ENCODE measurements at regions of chr14 and their contacts with region 1.

Region 1: DNA sequence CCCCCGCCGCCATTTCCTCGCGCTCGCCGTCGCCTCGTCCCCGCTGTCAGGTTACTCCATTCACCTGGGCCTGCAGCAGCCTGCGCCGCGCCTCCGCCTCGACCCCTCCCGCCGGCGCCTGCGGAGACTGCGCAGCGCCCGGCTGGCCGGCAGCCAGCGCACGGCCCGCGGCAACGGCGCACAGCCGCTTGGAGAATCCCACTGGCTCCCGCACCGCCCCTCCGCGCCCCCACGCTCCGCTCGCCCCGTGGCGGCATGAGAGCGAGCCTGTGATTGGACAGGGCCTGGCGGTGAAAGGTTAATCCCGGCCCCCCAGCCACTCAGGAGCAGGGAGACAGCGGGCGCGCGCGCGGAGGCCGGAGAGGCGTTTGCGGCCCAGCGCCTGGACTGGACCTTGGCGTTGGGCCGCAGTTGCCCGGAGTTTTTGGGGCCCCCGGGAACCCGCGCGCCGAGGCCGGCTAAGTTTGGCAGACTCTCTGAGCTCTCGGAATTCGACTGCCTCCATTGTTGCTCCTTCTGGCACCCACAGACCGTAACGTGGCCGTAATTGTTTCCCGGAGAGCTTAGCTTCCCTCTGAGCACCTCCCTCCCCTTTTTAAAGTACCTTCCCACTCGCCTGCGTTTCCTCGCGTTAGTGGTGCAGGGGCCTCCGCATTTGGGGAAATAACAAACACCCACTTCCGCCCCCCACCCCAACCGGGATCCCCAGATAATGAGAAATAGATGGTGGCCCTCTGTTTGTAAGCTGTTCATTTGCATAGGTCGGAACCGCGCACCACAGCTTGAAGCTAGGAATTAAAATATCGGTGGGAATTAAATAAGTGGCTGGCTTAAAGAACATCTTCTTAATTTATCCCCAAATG is at the start of gene DICER1:
- DNase-seq: peak; percentile 97 to 99
- ATAC-seq: peak; percentile 96 to 98 (median 98)
- H3K4me3 ChIP-seq: peak within 1 kb of the TSS; percentile 83
- H3K27ac ChIP-seq: peak within 1 kb of the TSS; percentile 94
- H3K4me1 ChIP-seq: peaks cover 32% of the 10 kb centered on the region
- H3K27me3 ChIP-seq: no peaks in the 10 kb centered on the region
- CTCF ChIP-seq: no peak
- total RNA-seq, gene DICER1: 30.7 to 41.5 (median 39.3) TPM

Region 2: DNA sequence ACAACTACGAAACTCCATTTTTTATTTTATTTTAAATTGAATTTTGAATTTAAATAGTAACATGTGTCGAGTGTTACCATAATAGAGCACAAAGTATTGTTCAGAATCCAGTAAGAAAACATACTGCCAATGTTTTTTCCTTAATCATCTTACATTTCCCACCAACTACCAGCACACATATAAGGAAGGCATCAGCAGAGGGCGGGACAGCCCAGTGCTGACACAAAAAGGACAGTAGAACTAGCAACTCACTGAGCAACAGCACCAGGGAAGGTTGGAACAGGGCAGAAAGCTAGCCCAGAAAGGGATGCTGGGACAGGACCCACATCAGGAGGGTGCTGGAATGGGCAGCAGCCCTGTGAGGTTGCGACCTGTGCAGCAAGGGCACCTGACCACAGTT is 44.1 kb before region 1 on chr14:
- intact Hi-C with region 1: no loop called
- DNase-seq: no peak
- ATAC-seq: no peak
- H3K4me3 ChIP-seq: no peak overlapping the region
- H3K27ac ChIP-seq: no peak overlapping the region
- H3K4me1 ChIP-seq: peaks cover 8% of the 10 kb centered on the region
- H3K27me3 ChIP-seq: no peaks in the 10 kb centered on the region
- CTCF ChIP-seq: no peak

Region 3: DNA sequence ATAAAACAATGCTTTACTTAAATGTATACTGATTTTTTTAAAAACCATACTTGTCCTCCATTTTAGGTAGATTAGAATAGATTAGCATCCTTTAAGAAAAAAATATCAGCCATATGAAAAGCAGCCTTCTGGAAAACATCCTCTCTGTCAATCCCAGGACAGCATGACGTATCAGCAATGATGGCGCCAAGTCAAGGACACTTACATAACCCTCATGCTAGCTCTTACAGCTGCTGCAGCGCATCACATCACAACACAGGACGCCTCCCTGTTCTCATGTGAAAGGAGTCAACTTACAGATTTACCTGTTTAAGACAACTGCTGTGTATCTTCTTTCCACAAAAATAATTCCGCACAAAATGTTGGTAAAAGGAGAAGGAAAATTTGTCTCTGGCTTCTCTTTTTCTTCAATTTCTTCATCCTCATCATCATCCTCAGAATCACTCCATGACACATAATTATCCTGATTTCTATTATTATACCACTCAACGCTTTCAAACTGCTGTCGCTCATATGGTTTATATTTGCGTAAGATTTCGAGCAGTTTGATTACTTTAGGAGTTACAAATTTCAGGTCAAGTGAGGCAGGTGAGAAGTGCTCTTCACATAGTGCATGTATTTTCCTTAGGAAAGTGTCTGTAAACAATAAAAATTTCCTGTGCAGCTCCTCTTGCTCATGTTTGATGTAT is 33.5 kb before region 1 on chr14:
- intact Hi-C with region 1: loop called in 1 of 2 experiments (anchors 2 kb)
- DNase-seq: peak; percentile 65 to 83
- ATAC-seq: peak; percentile 97 to 99 (median 98)
- H3K4me3 ChIP-seq: no peak overlapping the region
- H3K27ac ChIP-seq: peak overlapping the region; percentile 78
- H3K4me1 ChIP-seq: peaks cover 16% of the 10 kb centered on the region
- H3K27me3 ChIP-seq: no peaks in the 10 kb centered on the region
- CTCF ChIP-seq: no peak

Region 4: DNA sequence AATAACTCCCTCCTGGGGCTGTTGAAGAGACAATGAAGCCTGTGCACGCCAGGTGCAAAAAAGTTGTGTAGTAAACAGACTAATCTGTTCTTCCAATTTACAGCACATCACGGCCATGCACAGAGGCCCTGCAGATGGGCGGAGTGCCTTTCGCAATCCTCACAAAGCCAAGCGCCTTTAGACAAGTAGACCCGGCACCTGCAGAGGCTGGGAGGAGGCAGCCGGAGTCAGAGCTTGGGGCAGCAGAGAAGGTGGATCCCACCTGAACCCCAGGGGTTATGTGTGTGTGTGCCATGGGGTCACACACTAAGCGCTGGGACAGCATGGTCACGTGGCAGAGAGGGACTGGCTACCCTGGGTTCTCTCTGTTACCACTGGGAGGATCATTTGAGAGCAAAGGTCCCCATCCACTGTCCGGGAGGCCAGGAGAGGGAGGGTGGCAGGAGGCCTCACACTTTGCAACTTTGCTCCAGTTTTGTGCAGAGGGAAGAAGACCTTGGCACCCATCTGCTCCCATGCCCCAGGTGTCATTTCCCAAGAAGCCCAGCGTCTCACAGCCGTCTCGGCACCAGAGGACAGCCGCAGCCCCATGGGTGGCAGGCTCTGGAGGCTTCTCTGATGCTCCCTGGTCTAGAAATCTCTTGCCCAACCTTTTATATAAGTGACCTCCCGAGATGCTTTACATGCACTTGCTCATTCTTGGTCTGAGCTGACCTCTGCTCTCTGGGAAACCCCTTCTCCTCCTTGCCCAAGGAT is 79.7 kb after region 1 on chr14:
- intact Hi-C with region 1: no loop called
- DNase-seq: peak in 1 of 2 donors; percentile 82
- ATAC-seq: peak in 2 of 4 donors; percentile 33 to 61
- H3K4me3 ChIP-seq: no peak overlapping the region
- H3K27ac ChIP-seq: no peak overlapping the region
- H3K4me1 ChIP-seq: no peaks in the 10 kb centered on the region
- H3K27me3 ChIP-seq: no peaks in the 10 kb centered on the region
- CTCF ChIP-seq: no peak

Region 5: GRCh38 chr14:95534299-95535225 is 377.0 kb after region 1 on chr14 and contains the start of gene GLRX5:
- intact Hi-C with region 1: loop called in 1 of 2 experiments (anchors 10 kb)
- DNase-seq: peak; percentile 97 to 99
- ATAC-seq: peak; percentile 92 to 95 (median 95)
- H3K4me3 ChIP-seq: peak within 1 kb of the TSS; percentile 96
- H3K27ac ChIP-seq: peak within 1 kb of the TSS; percentile 87
- H3K4me1 ChIP-seq: peaks cover 74% of the 10 kb centered on the region
- H3K27me3 ChIP-seq: no peaks in the 10 kb centered on the region
- CTCF ChIP-seq: no peak
- total RNA-seq, gene GLRX5: 46.9 to 97.6 (median 57.0) TPM